IMR-90 (cell line): ENCODE measurements at regions of chr12 and their contacts with region 1.

Region 1: GRCh38 chr12:6195665-6196535 is 4.3 kb upstream of the CD9 start:
- DNase-seq: peak; percentile 91
- ATAC-seq: peak; percentile 77
- H3K4me3 ChIP-seq: no peak overlapping the region
- H3K27ac ChIP-seq: no peak overlapping the region
- H3K4me1 ChIP-seq: peaks cover 13% of the 10 kb centered on the region
- H3K27me3 ChIP-seq: no peaks in the 10 kb centered on the region; the same call in 1 of the 2 replicates
- CTCF ChIP-seq: peak; percentile 87
- POLR2A ChIP-seq: no peak
- RAD21 ChIP-seq: peak; percentile 89

Region 2: DNA sequence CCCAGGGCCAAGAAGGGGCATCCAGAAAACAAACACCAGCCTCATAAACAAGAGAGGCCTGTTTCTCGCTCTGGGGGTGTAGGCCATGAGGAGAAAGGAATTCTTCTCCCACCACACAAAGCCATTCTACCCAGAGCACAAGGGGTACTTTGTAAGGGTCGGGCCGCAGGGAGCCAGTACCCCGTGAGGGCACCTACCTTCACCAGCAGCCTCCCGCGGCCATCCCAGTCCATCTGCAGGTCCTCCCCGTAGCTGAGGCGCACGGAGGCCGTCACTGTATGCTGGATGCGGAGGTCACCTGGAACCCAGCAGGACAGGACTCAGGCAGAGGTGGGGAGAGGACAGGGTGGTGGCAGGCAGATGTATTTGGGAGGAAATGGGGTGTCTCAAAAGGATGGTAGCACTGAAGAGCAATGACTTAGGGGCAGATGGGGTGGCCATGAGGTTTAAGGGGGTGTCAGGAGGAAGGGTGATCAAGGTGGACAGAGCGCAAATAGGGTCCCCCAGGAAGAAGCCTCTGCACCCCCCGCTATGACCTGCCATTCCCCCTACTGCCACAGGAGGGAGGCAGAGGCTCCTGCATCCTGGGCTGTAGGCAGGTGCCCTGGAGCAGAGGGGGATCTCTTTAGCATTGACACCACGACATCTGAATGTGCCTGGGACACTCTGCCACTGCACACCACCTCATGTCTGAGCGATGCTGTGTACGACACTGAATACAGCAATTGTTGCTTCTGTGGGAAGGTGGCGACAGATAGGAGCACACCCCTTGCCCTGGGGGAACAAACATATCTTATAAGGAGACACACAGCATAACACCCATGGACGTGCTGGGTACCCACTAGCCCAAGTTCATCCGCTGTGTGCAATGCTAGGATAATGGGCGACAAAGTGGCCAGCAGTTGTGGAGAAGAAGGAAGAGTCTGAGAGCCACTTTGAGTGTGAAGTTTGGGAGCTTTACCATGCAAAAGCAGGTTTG is 132.9 kb before region 1 on chr12:
- CTCF ChIA-PET with region 1: interaction called, 7 read pairs
- POLR2A ChIA-PET with region 1: no interaction called
- dilution Hi-C with region 1: no loop called
- in situ Hi-C with region 1: no loop called
- intact Hi-C with region 1: loop called (anchors 1 kb)
- DNase-seq: peak; percentile 48
- ATAC-seq: peak; percentile 91
- H3K4me3 ChIP-seq: no peak overlapping the region
- H3K27ac ChIP-seq: no peak overlapping the region; the same call in 1 of the 2 replicates
- H3K4me1 ChIP-seq: peaks cover 21% of the 10 kb centered on the region
- H3K27me3 ChIP-seq: no peaks in the 10 kb centered on the region
- CTCF ChIP-seq: peak; percentile 94
- POLR2A ChIP-seq: 0 out of 2 replicates have a peak, but pooled peaks have one; percentile 38
- RAD21 ChIP-seq: peak; percentile 98

Region 3: GRCh38 chr12:6230321-6231110 is 34.6 kb after region 1 on chr12:
- CTCF ChIA-PET with region 1: interaction called, 15 read pairs
- POLR2A ChIA-PET with region 1: no interaction called
- dilution Hi-C with region 1: no loop called
- in situ Hi-C with region 1: no loop called
- intact Hi-C with region 1: no loop called
- DNase-seq: no peak
- ATAC-seq: peak; percentile 10
- H3K4me3 ChIP-seq: no peak overlapping the region
- H3K27ac ChIP-seq: peak overlapping the region; percentile 52
- H3K4me1 ChIP-seq: peaks cover 35% of the 10 kb centered on the region
- H3K27me3 ChIP-seq: no peaks in the 10 kb centered on the region
- CTCF ChIP-seq: no peak
- POLR2A ChIP-seq: 0 out of 2 replicates have a peak, but pooled peaks have one; percentile 5
- RAD21 ChIP-seq: no peak

Region 4: DNA sequence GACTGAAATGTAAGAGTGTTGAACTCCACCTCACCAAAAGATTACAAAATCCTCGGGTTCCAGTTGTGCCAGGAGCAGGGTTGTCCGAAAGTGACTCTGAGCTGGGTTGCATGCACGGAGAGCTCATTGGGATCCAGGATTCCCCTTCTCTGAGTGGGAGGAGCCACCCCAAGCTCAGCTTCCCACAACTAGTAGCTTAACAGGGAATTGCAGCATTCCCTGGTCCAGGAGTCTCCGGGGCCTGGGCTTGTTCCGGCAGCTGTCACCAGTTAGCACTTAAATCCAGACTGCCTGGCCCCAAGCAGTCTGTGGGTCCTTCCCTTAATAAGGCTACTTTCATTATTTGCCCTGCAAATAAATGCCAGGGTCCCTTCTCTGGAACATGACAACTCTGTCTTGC is 54.4 kb after region 1 on chr12:
- CTCF ChIA-PET with region 1: no interaction called
- POLR2A ChIA-PET with region 1: no interaction called
- dilution Hi-C with region 1: no loop called
- in situ Hi-C with region 1: no loop called
- intact Hi-C with region 1: no loop called
- DNase-seq: no peak
- ATAC-seq: peak; percentile 37
- H3K4me3 ChIP-seq: no peak overlapping the region
- H3K27ac ChIP-seq: no peak overlapping the region
- H3K4me1 ChIP-seq: no peaks in the 10 kb centered on the region
- H3K27me3 ChIP-seq: peaks cover 20% of the 10 kb centered on the region
- CTCF ChIP-seq: no peak
- POLR2A ChIP-seq: no peak
- RAD21 ChIP-seq: no peak

Region 5: DNA sequence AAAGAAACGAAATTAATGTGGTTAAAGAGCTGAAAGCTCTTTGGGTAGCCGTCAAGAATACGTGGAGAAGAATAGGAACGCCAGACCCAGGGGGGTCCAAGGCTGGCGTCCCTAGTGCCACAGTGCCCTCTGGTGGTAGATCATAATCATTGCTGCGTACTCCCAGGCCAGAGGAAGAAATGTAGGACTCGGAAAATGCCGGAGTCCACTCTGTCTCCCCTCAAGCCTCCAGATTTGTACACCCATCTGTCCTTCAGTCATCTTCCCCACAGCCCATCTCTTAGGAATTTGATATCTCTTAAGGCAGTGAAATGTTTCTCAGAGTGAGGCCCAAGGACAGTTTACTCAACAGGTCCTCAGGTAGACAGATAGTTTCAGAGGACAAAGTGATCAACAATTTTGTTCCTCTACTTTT is 89.2 kb after region 1 on chr12:
- CTCF ChIA-PET with region 1: interaction called, 29 read pairs
- POLR2A ChIA-PET with region 1: interaction called, 3 read pairs
- dilution Hi-C with region 1: no loop called
- in situ Hi-C with region 1: no loop called
- intact Hi-C with region 1: loop called (anchors 1 kb)
- DNase-seq: peak; percentile 76
- ATAC-seq: peak; percentile 56
- H3K4me3 ChIP-seq: no peak overlapping the region
- H3K27ac ChIP-seq: no peak overlapping the region
- H3K4me1 ChIP-seq: peaks cover 18% of the 10 kb centered on the region
- H3K27me3 ChIP-seq: no peaks in the 10 kb centered on the region
- CTCF ChIP-seq: peak; percentile 96
- POLR2A ChIP-seq: peak; percentile 44; the same call in 1 of the 2 replicates
- RAD21 ChIP-seq: peak; percentile 99

Region 6: DNA sequence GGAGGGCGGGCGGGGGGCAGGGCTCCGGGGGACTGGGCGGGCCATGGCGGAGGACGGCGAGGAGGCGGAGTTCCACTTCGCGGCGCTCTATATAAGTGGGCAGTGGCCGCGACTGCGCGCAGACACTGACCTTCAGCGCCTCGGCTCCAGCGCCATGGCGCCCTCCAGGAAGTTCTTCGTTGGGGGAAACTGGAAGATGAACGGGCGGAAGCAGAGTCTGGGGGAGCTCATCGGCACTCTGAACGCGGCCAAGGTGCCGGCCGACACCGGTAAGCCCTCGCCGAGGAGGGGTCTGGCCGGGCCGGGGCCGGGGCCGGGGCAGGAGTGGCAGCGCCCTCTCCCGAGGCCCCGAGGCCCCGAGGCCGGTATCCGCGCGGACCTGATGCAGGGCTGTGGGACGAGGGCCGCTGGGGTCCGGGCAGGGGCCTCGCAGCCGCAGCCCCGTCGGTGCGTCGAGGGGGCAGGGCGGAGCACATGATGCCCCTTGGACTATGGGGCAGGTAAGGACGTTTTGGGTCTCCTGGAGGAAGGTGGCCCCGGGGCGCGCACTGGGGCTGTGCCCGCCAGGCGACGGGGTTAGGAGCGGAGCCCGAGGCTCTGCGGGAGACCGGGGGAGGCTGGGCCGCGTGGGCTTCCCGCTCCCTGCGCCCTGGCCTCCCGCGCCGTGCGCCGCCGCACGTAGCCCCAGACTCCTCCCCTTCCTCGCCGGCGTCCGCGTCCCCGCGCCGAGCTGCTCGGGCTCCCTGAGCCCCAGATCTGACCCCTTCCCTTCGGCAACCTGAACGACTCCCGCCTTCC is 671.7 kb after region 1 on chr12 and contains the start of gene TPI1:
- CTCF ChIA-PET with region 1: no interaction called
- POLR2A ChIA-PET with region 1: no interaction called
- dilution Hi-C with region 1: no loop called
- in situ Hi-C with region 1: no loop called
- intact Hi-C with region 1: no loop called
- DNase-seq: peak; percentile 74
- ATAC-seq: peak; percentile 82
- H3K4me3 ChIP-seq: peak within 1 kb of the TSS; percentile 87
- H3K27ac ChIP-seq: peak within 1 kb of the TSS; percentile 97
- H3K4me1 ChIP-seq: peaks cover 19% of the 10 kb centered on the region
- H3K27me3 ChIP-seq: no peaks in the 10 kb centered on the region
- CTCF ChIP-seq: no peak
- POLR2A ChIP-seq: peak; percentile 99
- RAD21 ChIP-seq: no peak
- total RNA-seq, gene TPI1: 1,842 and 2,176 TPM in 2 replicates